ENCODE measurements at regions of chr3 and their contacts with region 1.

Region 1: DNA sequence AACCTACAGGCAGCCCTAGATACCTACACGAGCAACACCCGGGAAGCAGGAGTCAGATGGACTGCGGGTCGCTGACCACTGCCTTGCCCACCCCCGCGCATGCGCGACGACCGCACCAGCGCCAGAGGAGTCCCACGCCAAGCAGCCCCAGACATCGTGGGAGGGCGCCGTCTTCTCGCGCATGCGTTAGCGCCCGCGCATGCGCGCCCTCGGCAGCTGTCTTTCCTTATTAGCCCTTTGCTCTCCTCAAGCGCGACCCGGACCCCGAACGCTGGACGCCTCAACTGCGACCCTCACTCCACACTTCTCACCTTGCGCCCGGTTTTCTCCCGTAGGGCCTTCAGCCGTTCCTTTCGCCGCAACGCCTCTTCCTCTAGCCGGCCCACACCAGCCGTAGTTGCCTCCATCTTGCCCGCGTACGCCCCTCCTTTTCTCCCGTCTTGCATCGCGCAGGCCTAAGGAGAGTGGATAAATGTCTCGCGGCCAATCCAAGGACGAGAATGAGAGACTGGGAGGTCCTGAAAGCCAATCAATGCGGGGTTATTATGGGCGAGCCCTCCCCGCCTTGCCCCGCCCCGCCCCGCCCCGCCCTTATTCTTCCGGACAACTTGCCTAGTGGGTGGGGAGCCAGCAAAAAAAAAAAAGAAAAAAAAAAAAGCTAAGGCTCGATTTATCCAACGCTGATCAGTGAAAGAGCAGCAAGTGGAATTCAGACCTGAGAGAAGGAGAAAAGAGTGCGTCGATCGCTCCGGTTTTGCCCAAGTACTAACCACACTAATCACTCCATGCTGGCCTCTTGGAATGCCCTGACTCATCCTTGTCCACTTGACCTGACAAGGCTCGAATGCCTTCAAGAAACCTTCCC is at the start of gene CCDC12:
- DNase-seq: peak; percentile 89
- ATAC-seq: peak; percentile 81
- H3K4me3 Mint-ChIP-seq: peak within 1 kb of the TSS; percentile 98
- H3K27ac Mint-ChIP-seq: peak within 1 kb of the TSS; percentile 97
- H3K4me1 Mint-ChIP-seq: peaks cover 51% of the 10 kb centered on the region
- H3K27me3 Mint-ChIP-seq: no peaks in the 10 kb centered on the region
- total RNA-seq, gene CCDC12: 58.6 to 60.0 TPM

Region 2: DNA sequence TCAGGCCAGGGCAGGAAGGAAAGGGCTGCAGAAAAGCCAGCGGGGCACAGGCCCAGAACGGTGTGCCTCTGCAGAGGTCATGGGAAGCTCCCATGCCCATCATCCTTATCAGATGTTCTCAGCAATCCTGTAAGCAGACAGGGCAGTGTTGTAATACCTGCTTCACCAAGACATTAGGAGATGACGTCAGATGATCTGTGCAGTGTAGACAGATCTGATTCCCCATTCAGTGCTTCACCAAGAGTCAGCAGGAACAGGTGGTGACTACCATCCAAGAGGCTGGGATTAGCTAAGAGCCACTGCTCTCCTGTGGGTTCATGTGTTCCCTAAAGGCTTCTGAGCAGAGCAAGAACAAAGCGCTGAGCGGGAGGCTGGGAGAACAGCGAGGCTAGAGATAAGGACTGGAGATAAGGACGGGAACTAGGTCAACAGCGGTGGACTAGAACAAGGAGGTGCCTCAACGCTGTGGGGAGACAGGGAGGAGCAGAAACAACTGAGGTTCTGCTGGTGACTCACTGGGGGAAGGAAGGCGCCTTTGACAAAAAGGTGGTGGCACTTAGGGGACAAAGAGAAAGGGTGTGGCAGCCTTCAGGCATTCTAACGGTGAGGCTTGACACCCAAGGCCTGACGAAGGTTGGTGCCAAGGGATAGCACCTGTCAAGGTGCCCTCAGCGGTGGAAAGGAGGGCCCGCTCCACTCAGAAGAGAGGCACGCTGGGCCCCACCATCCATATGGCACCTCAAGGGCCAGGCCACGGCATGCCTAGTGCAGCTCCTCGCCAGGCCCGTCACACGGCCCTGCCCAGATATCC is 28.4 kb before region 1 on chr3:
- POLR2A ChIA-PET with region 1: interaction called, 12 read pairs
- DNase-seq: peak; percentile 54
- ATAC-seq: peak; percentile 77
- H3K4me3 Mint-ChIP-seq: peak overlapping the region; percentile 47
- H3K27ac Mint-ChIP-seq: peak overlapping the region; percentile 69
- H3K4me1 Mint-ChIP-seq: peaks cover 63% of the 10 kb centered on the region
- H3K27me3 Mint-ChIP-seq: no peaks in the 10 kb centered on the region

Region 3: GRCh38 chr3:46959161-46959511 is 17.4 kb before region 1 on chr3:
- POLR2A ChIA-PET with region 1: interaction called, 12 read pairs
- DNase-seq: no peak
- ATAC-seq: peak; percentile 49
- H3K4me3 Mint-ChIP-seq: peak overlapping the region; percentile 39
- H3K27ac Mint-ChIP-seq: peak overlapping the region; percentile 83
- H3K4me1 Mint-ChIP-seq: peaks cover 72% of the 10 kb centered on the region
- H3K27me3 Mint-ChIP-seq: no peaks in the 10 kb centered on the region

Region 4: DNA sequence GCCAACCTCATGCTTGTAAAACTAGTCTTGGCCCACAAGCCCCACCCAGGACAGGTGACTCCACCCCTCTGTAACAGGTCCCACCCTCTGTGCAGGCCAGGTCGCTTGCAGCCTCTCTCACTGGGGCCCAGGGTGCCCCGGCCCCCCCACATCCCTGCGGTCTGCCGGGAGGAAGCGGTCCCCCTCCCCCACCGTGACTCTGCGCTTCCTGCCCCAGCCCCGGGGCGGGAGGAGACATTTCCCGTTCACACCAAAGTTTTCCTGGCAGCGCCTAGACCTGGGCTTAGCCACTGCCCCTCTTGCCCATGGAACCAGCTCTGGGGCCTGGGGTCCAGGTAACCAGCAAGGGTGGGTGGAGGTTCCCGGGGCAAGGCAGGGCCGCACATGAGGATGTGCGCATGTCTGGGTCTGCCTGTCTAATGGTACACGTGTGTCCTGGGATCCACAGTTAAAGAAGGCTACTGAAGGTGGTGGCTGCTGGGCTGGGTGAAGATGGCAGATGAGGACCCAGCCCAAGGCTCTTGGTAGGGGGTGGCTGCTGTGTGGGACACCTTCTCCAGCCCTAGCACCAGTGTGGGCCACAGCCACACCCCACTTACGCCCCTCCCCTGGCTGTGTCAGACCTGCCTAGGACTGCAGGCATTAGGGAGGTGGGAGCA is 11.3 kb after region 1 on chr3:
- POLR2A ChIA-PET with region 1: interaction called, 33 read pairs
- DNase-seq: peak; percentile 92
- ATAC-seq: peak; percentile 98
- H3K4me3 Mint-ChIP-seq: peak overlapping the region; percentile 85
- H3K27ac Mint-ChIP-seq: peak overlapping the region; percentile 90
- H3K4me1 Mint-ChIP-seq: peaks cover 59% of the 10 kb centered on the region
- H3K27me3 Mint-ChIP-seq: no peaks in the 10 kb centered on the region

Region 5: DNA sequence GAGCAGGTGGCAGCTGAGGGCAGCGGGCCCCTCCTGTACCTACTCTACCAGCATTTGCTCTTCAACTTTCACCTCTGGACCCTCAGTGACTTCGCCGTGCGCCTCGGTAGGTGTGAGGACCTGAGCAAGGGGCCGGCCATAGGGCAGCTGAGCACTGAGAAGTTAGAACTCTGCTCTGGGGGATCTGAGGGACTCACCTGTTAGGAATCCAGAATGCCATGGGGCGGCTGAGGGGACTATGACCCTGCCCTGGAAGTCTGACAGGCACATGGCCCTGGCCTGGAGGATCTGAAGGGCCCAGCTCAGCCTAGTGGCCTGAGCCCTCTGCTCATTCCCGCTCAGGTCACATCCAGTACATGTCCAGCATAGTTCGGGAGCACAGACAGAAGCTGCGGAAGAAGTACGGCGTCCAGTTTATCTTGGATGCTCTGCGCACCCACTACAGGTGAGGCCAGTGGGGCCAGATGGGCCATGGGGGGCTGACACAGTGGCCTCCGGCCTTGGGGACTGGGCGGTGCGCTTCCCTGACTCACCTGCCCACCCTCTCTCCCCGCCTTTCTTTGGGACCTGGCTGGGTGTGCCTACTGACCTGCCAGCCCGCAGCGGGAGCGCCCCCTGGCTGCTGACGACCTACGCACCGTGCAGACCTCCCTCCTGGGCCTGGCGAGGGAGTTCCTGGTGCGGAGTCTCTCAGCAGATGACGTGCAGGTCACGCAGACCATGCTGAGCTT is 21.7 kb after region 1 on chr3:
- POLR2A ChIA-PET with region 1: interaction called, 11 read pairs
- DNase-seq: peak; percentile 84
- ATAC-seq: peak; percentile 64
- H3K4me3 Mint-ChIP-seq: no peak overlapping the region
- H3K27ac Mint-ChIP-seq: peak overlapping the region; percentile 71
- H3K4me1 Mint-ChIP-seq: peaks cover 14% of the 10 kb centered on the region
- H3K27me3 Mint-ChIP-seq: no peaks in the 10 kb centered on the region